Heart left ventricle (tissue), 16 donors: ENCODE measurements at regions of chr9 and their contacts with region 1.

Region 1: DNA sequence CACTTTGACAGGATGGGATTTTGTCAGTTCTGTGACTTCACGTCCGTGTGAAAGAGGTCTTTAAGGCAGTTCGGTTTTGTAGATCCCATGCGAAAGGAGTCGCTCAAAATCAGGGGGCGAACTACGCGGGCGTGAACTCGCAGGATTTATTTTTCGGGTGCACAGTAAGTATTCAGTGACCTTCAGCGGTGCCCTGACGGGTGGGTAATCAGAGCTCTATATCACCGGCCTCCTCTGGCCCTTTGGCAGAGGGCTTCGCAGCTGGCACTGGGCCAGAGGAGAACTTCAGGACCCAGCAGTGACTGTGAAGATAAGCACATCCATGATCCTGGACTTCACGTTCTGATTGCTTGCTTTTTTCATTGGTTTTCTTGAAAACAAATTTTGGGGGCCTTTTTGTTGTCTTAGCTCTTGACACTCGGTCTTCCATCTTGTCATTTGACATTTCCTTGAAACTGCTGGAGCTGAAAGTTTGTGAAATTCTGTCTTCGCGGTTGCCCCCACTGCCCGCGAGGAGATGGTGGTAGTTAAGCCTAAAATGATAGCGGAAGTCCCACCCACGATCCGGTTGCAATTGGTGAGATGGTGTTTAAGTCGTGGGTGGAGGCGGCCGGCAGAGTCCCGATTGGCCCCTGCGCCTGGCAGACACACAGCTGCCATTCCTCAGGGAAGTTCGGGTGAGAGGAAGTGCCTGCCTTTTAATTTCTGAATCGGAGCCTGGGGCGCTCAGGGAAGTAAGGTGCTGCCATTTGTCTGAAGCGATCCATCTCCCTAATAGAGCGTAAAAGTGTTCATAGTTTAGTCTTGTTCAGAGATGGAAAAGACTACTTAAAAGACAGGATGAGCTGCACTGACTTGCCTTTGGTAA is at the start of gene FAM120AOS:
- DNase-seq: peak; percentile 93 to 96 (median 94)
- ATAC-seq: peak; percentile 87 to 96 (median 88)
- H3K4me3 ChIP-seq: peak within 1 kb of the TSS; percentile 68 to 99 (median 93)
- H3K27ac ChIP-seq: peak within 1 kb of the TSS; percentile 77 to 97 (median 96)
- H3K4me1 ChIP-seq: peaks cover under 1 to 66% (median 43%) of the 10 kb centered on the region in 12 donors
- H3K27me3 ChIP-seq: no peaks in the 10 kb centered on the region
- CTCF ChIP-seq: no peak
- POLR2A ChIP-seq: peak; percentile 10 to 68
- total RNA-seq, gene FAM120AOS: 27.2 to 38.8 (median 33.7) TPM

Region 2: GRCh38 chr9:93134015-93134739 is 319.1 kb before region 1 on chr9 and contains the start of gene NINJ1:
- intact Hi-C with region 1: loop called in 1 of 10 experiments (anchors 10 kb)
- DNase-seq: peak; percentile 72 to 87 (median 80)
- ATAC-seq: peak; percentile 46 to 86 (median 77)
- H3K4me3 ChIP-seq: peak within 1 kb of the TSS; percentile 69 to 98 (median 86)
- H3K27ac ChIP-seq: peak within 1 kb of the TSS; percentile 74 to 97 (median 95)
- H3K4me1 ChIP-seq: peaks cover 4 to 63% (median 48%) of the 10 kb centered on the region in 12 donors
- H3K27me3 ChIP-seq: no peaks in the 10 kb centered on the region
- CTCF ChIP-seq: no peak
- POLR2A ChIP-seq: peak; percentile 62 to 81
- total RNA-seq, gene NINJ1: 42.2 to 96.1 (median 56.3) TPM

Region 3: DNA sequence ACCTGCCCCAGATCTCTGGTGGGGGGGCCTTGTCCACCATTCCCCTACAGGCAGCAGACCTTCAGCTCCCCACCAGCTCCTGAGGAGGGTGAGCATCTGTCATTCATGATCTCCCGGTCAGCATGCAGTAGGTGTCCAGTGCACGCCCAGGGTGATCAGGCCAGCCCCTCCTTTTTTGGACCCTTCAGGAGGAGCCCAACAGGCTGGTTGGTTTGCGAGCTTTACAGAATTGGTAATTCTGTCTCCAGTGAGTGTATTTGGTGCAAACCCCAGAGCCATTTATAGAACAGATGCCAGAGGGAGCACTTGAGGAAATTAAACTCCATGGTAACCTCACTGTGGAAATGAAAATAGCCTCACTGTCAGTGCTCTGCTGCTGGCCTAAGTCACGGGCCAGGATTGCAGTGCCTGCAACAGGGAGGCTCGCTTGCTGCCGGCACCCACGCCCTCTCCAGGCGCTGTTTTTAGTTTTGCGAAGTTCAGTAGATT is 245.9 kb before region 1 on chr9:
- intact Hi-C with region 1: no loop called
- DNase-seq: peak; percentile 61 to 78 (median 73)
- ATAC-seq: peak; percentile 66 to 81 (median 73)
- H3K4me3 ChIP-seq: peak overlapping the region in 4 of 12 donors; percentile 11 to 37 (median 26)
- H3K27ac ChIP-seq: peak overlapping the region; percentile 47 to 99 (median 88)
- H3K4me1 ChIP-seq: peaks cover 0 to 86% (median 44%) of the 10 kb centered on the region in 12 donors
- H3K27me3 ChIP-seq: no peaks in the 10 kb centered on the region
- CTCF ChIP-seq: peak in 5 of 12 donors; percentile 7 to 38 (median 22)
- POLR2A ChIP-seq: no peak

Region 4: GRCh38 chr9:93520523-93520922 is 67.2 kb after region 1 on chr9:
- intact Hi-C with region 1: loop called in 2 of 10 experiments (anchors 5 to 10 kb)
- DNase-seq: no peak
- ATAC-seq: no peak
- H3K4me3 ChIP-seq: no peak overlapping the region
- H3K27ac ChIP-seq: no peak overlapping the region
- H3K4me1 ChIP-seq: peaks cover 0 to 27% (median 5%) of the 10 kb centered on the region in 12 donors
- H3K27me3 ChIP-seq: no peaks in the 10 kb centered on the region
- CTCF ChIP-seq: peak in 1 of 12 donors; percentile 6
- POLR2A ChIP-seq: no peak

Region 5: DNA sequence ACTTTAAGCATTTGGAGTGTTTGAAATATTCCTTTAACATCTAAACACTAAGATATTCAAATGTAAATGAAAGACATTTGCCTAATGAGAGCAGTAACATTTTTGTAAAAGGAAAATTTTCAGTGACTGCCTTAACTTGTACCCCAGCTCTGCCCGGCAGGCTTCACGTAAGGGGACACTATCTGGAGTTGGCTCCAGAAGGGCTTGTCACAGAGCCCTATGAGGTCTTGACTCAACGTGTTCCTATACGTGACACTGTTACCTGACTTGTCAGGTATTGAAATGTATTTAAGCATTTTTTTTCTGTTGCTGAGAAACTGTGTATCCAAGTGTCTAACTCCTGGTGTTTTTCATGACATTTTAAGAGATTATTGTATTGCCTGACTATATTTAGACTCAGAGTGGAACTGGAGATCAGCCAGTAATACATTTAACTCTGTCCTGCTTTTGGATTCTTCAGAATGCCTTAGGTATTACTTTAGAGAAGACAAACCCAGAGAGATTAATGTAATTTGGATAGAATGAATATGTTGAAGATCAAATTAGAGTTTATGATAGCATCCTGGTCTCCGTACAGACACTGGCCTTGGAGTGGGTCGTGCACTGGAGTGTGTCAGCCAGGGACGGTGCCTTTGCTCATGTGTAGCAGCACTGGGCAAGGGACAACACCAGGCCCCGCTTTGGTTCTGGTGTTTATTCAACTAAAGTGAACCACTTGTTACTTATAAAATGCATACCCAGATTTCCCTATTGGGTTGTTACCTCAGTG is 88.5 kb after region 1 on chr9:
- intact Hi-C with region 1: loop called in 2 of 10 experiments (anchors 5 to 10 kb)
- DNase-seq: peak in 1 of 5 donors; percentile 27
- ATAC-seq: peak; percentile 56 to 72 (median 68)
- H3K4me3 ChIP-seq: no peak overlapping the region
- H3K27ac ChIP-seq: peak overlapping the region in 9 of 12 donors; percentile 3 to 79 (median 22)
- H3K4me1 ChIP-seq: peaks cover 0 to 37% (median 12%) of the 10 kb centered on the region in 12 donors
- H3K27me3 ChIP-seq: no peaks in the 10 kb centered on the region
- CTCF ChIP-seq: no peak
- POLR2A ChIP-seq: no peak

Region 6: DNA sequence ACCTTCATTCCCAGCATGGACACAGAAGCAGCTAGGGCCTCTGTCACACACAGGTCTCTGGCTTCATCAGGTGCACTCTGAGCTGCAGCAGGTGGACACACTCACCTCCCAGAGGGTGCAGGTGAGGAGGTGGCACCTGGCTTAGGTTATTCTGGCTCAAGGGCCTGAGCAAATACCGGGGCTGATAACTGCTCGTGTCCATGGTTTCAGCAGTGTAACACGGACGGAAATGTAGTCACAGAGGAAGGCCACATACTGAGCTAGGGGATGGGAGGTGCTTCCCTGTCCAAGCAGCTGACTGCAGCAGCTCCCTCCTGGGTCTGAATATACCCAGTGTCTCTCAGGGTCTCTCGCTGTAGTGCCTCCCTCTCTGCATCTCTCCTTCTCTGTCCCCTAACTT is 128.8 kb after region 1 on chr9:
- intact Hi-C with region 1: loop called in 2 of 10 experiments (anchors 5 to 10 kb)
- DNase-seq: no peak
- ATAC-seq: peak in 3 of 4 donors; percentile 20 to 62 (median 35)
- H3K4me3 ChIP-seq: no peak overlapping the region
- H3K27ac ChIP-seq: peak overlapping the region in 6 of 12 donors; percentile 8 to 92 (median 36)
- H3K4me1 ChIP-seq: peaks cover 0 to 81% (median 61%) of the 10 kb centered on the region in 12 donors
- H3K27me3 ChIP-seq: no peaks in the 10 kb centered on the region
- CTCF ChIP-seq: no peak
- POLR2A ChIP-seq: no peak